ENCODE measurements at regions of chr5 and their contacts with region 1.

Region 1: DNA sequence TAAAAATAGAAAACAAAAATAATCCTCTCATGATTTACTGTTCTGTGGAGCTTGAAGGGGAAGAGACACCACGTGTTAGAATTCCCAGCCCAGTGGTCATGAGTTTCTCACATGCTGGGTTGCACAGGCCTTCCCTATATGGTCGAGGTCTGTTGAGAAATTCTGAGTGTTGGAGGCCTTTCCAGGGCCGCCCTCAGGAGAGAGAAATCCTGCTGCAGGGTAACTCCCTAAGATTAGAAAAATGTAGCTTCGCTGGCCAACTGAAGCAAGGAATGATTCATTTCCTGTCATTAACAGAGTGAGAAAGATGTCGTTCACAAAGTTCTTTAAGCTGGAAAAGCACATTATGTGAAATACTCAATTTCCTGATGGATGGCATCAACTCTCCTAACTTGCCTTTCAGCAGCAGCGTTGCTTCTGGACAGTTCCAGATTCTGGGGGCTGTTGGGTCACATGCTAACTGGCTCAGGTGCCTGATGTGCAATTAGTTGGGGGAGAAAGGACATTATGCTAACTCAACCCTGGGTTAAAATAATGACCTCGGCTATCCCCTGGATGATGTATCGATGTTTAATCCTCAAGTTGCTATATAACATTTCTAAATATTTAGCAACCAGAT is 104.8 kb upstream of the CD180 start:
- DNase-seq: peak; percentile 23 to 42
- ATAC-seq: peak; percentile 64 to 90 (median 84)
- H3K4me3 ChIP-seq: no peak overlapping the region
- H3K27ac ChIP-seq: peak overlapping the region; percentile 30 to 80 (median 44)
- H3K4me1 ChIP-seq: peaks cover 0 to 65% (median 11%) of the 10 kb centered on the region in 9 donors
- H3K27me3 ChIP-seq: no peaks in the 10 kb centered on the region
- CTCF ChIP-seq: no peak

Region 2: DNA sequence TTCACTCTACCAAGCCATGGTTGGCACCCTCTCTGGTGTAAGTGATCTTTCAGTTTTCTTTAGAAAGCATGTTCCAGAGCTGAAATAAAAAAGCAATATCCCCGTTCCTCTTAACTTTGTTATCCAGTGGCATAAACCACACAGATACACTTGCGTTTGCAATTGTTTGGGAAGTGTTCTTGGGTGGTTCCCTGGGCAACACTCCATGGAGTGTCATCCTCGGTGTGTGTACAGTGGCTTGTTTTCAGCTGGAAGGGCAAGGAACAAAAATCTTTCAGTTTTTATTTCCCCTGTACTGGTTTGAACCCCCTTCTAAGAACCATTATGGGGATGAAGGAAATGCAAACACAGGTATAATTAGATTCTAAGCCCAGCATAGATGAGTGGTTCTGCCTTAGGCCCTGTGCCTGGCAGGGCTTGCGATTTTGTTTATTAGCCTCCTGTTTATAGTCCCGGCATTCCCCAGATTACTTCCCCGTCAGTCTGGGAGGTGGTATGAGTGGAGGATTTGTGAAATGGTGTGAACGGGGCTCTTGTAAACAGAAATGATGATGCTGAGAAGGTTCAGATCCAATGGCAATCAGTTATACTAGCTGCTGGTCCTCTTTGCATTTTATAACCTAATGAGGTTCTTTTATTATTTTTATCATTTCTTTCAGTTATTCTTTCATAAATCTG is 28.8 kb before region 1 on chr5:
- intact Hi-C with region 1: no loop called
- DNase-seq: no peak
- ATAC-seq: no peak
- H3K4me3 ChIP-seq: no peak overlapping the region
- H3K27ac ChIP-seq: no peak overlapping the region
- H3K4me1 ChIP-seq: peaks cover 11 to 29% (median 22%) of the 10 kb centered on the region in 9 donors
- H3K27me3 ChIP-seq: no peaks in the 10 kb centered on the region
- CTCF ChIP-seq: no peak

Region 3: GRCh38 chr5:67799732-67800234 is 498.4 kb after region 1 on chr5:
- intact Hi-C with region 1: loop called in 1 of 10 experiments (anchors 5 kb)
- DNase-seq: peak; percentile 9 to 36
- ATAC-seq: peak; percentile 76 to 92 (median 86)
- H3K4me3 ChIP-seq: no peak overlapping the region
- H3K27ac ChIP-seq: peak overlapping the region in 7 of 10 donors; percentile 37 to 74 (median 58)
- H3K4me1 ChIP-seq: peaks cover 0 to 13% (median 0%) of the 10 kb centered on the region in 9 donors
- H3K27me3 ChIP-seq: no peaks in the 10 kb centered on the region
- CTCF ChIP-seq: no peak

Measured in heart right ventricle (tissue), 16 donors.